Uterus (tissue), 4 donors: ENCODE measurements at regions of chr1 and their contacts with region 1.

Region 1: GRCh38 chr1:26811057-26811456 is 15.4 kb upstream of the ZDHHC18 start:
- DNase-seq: no peak
- H3K4me3 ChIP-seq: no peak overlapping the region
- H3K27ac ChIP-seq: no peak overlapping the region
- H3K4me1 ChIP-seq: no peaks in the 10 kb centered on the region
- H3K27me3 ChIP-seq: no peaks in the 10 kb centered on the region
- CTCF ChIP-seq: no peak
- POLR2A ChIP-seq: no peak

Region 2: DNA sequence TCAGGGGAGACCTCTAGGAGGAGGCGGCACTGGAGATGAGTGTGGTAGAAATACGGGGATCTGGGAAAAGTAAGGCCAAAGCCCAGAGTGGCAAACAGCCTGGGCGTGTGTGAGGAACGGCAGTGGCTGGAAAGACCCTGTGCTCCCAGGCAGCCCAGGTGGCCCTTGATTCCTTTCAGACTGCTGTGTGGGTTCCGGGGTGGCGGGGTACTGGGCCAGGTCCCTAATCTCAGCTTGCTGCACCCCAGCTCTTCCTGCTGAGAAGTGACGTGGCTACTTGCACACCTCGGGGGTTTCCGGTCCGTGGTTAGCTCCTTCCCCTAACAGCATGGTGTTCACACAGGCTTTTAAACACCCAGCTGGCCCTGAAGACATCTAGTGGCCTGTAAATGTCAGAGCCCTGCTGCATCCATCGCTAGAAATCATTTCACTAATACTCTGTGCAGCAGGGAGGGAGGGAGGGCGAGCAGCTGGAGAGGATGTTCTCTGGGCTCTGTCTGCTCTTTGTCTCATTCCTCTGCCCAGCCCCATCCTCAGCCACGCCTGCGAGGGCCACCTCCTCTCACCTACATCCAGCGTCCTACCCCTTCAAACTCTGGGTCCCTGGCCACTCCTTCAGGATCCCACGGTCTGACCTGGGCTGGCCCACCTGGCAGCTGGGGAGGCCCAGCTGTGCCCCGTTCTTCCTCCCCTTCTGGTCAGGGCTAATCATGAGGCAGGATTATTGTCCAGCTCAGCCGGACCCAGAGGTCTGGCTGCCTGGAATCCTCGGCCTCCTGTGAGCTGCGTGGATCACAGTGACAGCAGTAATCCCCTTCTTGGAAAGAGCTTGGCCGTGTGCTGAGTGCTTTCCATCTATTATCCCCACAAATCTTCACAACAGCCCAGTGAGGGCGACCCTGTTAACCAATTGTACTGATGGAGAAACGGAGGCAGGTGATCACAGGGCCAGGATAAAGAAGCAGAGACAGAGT is 22.7 kb after region 1 on chr1:
- intact Hi-C with region 1: no loop called
- DNase-seq: no peak
- H3K4me3 ChIP-seq: no peak overlapping the region
- H3K27ac ChIP-seq: no peak overlapping the region
- H3K4me1 ChIP-seq: peaks cover 0 to 8% of the 10 kb centered on the region in 2 donors
- H3K27me3 ChIP-seq: no peaks in the 10 kb centered on the region
- CTCF ChIP-seq: no peak
- POLR2A ChIP-seq: no peak

Region 3: GRCh38 chr1:26874896-26875295 is 63.8 kb after region 1 on chr1:
- intact Hi-C with region 1: loop called (anchors 10 kb)
- DNase-seq: no peak
- H3K4me3 ChIP-seq: no peak overlapping the region
- H3K27ac ChIP-seq: no peak overlapping the region
- H3K4me1 ChIP-seq: no peaks in the 10 kb centered on the region
- H3K27me3 ChIP-seq: no peaks in the 10 kb centered on the region
- CTCF ChIP-seq: no peak
- POLR2A ChIP-seq: no peak